CD4-positive, alpha-beta memory T cell (primary cell): ENCODE measurements at regions of chr3 and their contacts with region 1.

Region 1: GRCh38 chr3:71495708-71496472 is 87.6 kb downstream of the FOXP1 start:
- DNase-seq: peak in 3 of 5 donors; percentile 27 to 64 (median 39)
- H3K4me3 ChIP-seq: peak overlapping the region; percentile 1 to 26
- H3K4me3 Mint-ChIP-seq: peak overlapping the region; percentile 72 to 89 (median 85)
- H3K27ac ChIP-seq: peak overlapping the region; percentile 50
- H3K27ac Mint-ChIP-seq: peak overlapping the region; percentile 88 to 98 (median 94)
- H3K4me1 ChIP-seq: peaks cover 82% of the 10 kb centered on the region
- H3K4me1 Mint-ChIP-seq: peaks cover 61 to 90% (median 72%) of the 10 kb centered on the region in 4 donors
- H3K27me3 ChIP-seq: no peaks in the 10 kb centered on the region
- H3K27me3 Mint-ChIP-seq: no peaks in the 10 kb centered on the region

Region 2: DNA sequence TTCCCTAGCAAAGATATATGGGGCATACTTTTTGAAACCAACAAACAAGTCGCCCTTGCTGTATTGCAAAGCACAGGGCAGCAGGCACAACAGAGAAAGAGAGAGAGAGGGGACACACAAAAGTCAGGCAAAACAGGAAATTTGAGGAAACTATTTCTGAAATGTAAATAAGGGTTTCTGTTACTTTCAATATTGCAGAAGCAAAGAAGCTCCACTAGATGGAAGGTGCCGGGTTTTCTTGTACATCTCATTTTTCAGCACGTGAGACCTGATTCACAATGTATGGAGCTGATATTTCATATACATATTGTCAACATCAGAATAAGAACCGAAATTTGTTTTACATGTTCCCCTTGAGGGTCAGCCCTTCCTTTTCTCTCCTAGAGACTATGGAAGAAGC is 39.7 kb before region 1 on chr3:
- CTCF ChIA-PET with region 1: interaction called, 19 read pairs
- POLR2A ChIA-PET with region 1: interaction called, 60 read pairs
- intact Hi-C with region 1: no loop called
- DNase-seq: peak in 4 of 5 donors; percentile 40 to 47 (median 44)
- H3K4me3 ChIP-seq: peak overlapping the region; percentile 15 to 30
- H3K4me3 Mint-ChIP-seq: peak overlapping the region; percentile 59 to 91 (median 84)
- H3K27ac ChIP-seq: peak overlapping the region; percentile 67
- H3K27ac Mint-ChIP-seq: peak overlapping the region; percentile 93 to 98 (median 96)
- H3K4me1 ChIP-seq: peaks cover 89% of the 10 kb centered on the region
- H3K4me1 Mint-ChIP-seq: peaks cover 80 to 98% (median 86%) of the 10 kb centered on the region in 4 donors
- H3K27me3 ChIP-seq: no peaks in the 10 kb centered on the region
- H3K27me3 Mint-ChIP-seq: no peaks in the 10 kb centered on the region

Region 3: DNA sequence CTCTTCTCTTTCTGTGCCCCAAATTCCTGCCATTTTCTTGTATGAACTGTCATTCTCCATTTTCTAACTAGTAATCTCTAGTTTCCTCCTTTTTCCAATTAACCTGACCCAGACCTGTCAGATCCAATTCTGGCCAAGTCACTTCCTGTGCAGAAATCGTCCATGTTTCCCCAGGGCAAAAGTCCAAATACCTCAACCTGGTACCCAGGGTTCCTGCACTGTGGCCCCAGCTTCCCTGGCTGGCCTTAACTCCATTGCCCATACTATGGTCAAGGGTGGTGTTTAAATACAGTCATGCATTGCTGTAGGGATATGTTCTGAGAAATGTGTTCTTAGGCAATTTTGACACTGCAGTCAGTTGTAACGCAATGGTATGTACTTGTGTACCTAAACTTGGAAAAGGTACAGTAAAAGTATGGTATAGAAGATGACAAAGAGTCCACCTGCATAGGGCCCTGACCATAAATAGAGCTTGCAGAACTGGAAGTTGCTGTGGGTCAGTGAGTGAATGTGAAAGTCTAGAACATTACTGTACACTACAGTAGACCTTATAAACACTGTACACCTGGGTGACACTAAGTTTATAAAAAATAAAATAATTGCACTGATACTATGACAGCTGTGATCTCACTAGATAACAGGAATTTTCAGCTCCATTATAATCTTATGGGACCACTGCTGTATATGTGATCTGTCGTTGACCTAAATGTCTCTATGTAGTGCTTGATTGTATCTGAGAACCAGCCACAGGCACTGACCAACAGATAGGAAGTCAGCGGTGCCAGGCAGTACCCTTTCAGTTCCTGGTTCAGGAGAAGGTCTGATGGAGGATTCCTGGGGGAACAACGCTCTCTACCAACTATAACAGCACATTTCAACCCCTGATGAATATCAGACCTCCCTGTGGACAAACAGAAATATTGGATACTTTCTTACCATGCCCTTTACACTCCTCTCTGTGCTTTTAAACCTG is 625.2 kb after region 1 on chr3:
- CTCF ChIA-PET with region 1: no interaction called
- POLR2A ChIA-PET with region 1: no interaction called
- intact Hi-C with region 1: no loop called
- DNase-seq: no peak
- H3K4me3 ChIP-seq: no peak overlapping the region
- H3K4me3 Mint-ChIP-seq: no peak overlapping the region
- H3K27ac ChIP-seq: no peak overlapping the region
- H3K27ac Mint-ChIP-seq: no peak overlapping the region
- H3K4me1 ChIP-seq: no peaks in the 10 kb centered on the region
- H3K4me1 Mint-ChIP-seq: no peaks in the 10 kb centered on the region
- H3K27me3 ChIP-seq: no peaks in the 10 kb centered on the region
- H3K27me3 Mint-ChIP-seq: peaks cover 0 to 2% of the 10 kb centered on the region in 2 donors